A549 (cell line): ENCODE measurements at regions of chr11 and their contacts with region 1.

Region 1: DNA sequence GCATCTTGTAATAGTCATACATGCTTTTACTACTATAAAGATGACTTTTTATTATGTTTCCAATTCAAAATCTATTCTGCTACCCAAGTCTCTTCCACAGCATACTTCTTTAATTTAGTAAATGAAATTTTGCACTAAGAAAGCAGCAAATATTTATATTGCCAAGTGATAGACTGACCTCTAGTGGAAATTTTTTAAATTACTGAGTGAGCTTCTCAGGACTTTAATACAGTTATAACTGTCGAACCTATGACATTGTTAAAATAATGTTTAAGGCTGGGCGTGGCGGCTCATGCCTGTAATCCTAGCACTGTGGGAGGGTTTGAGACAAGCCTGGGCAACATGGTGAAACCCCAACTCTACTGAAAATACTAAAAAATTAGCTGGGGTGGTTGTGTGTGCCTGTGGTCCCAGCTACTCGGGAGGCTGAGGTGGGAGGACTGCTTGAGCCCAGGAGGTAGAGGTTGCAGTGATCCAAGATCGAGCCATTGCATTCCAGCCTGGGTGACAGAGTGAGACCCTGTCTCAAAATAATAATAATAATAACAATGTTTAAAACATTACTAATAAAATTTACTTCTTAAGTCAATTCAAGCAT is 27.3 kb downstream of the STK33 start:
- DNase-seq: peak in 1 of 2 experiments; percentile 44
- ATAC-seq: peak; percentile 85 to 87
- H3K4me3 ChIP-seq: no peak overlapping the region
- H3K27ac ChIP-seq: no peak overlapping the region
- H3K4me1 ChIP-seq: peaks cover 8% of the 10 kb centered on the region; the same call in 2 of the 3 replicates
- CTCF ChIP-seq: peak; percentile 84
- EP300 ChIP-seq: no peak
- POLR2A ChIP-seq: no peak
- RAD21 ChIP-seq: peak; percentile 88 to 93

Region 2: GRCh38 chr11:8192016-8192895 is 374.5 kb before region 1 on chr11:
- CTCF ChIA-PET with region 1: interaction called, 28 read pairs
- POLR2A ChIA-PET with region 1: no interaction called
- DNase-seq: peak; percentile 69 to 78
- ATAC-seq: peak; percentile 90 to 98
- H3K4me3 ChIP-seq: no peak overlapping the region
- H3K27ac ChIP-seq: no peak overlapping the region
- H3K4me1 ChIP-seq: no peaks in the 10 kb centered on the region
- CTCF ChIP-seq: peak; percentile 79
- EP300 ChIP-seq: no peak
- POLR2A ChIP-seq: no peak
- RAD21 ChIP-seq: peak; percentile 74 to 82

Region 3: DNA sequence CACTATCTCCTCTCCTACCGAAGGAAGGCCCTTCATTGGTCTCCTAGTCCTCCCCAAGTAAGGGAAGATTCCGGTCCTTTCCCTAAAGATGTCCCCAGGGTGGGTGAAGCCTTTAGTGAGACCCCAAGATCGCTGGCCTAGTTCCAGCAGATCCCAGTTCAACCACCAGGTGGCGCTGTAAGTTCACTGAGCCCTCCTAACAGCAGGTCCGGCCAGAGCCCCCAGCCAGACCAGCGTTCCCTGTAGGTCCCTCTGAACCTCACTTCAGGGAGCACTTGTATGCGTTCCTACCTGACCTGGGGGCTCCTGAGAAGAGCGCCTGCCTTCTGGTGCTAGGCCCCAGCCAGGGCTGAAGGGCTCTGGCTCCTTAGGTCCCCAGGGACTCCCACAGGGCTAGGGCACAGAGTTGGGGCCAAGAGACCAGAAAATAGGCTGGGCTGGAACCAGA is 341.1 kb before region 1 on chr11:
- CTCF ChIA-PET with region 1: interaction called, 95 read pairs
- POLR2A ChIA-PET with region 1: no interaction called
- DNase-seq: peak; percentile 58 to 88
- ATAC-seq: peak; percentile 32 to 85; a peak in 4 of 6 replicates
- H3K4me3 ChIP-seq: no peak overlapping the region
- H3K27ac ChIP-seq: 0 out of 6 replicates have a peak overlapping the region, but pooled peaks of 1 of the 2 experiments have one; percentile 24
- H3K4me1 ChIP-seq: peaks cover 26% of the 10 kb centered on the region
- CTCF ChIP-seq: peak; percentile 91
- EP300 ChIP-seq: no peak
- POLR2A ChIP-seq: no peak
- RAD21 ChIP-seq: peak; percentile 94 to 95

Region 4: GRCh38 chr11:8459711-8460394 is 106.9 kb before region 1 on chr11:
- CTCF ChIA-PET with region 1: no interaction called
- POLR2A ChIA-PET with region 1: no interaction called
- DNase-seq: no peak
- ATAC-seq: no peak
- H3K4me3 ChIP-seq: no peak overlapping the region
- H3K27ac ChIP-seq: no peak overlapping the region
- H3K4me1 ChIP-seq: no peaks in the 10 kb centered on the region
- CTCF ChIP-seq: no peak
- EP300 ChIP-seq: no peak
- POLR2A ChIP-seq: no peak
- RAD21 ChIP-seq: no peak

Region 5: DNA sequence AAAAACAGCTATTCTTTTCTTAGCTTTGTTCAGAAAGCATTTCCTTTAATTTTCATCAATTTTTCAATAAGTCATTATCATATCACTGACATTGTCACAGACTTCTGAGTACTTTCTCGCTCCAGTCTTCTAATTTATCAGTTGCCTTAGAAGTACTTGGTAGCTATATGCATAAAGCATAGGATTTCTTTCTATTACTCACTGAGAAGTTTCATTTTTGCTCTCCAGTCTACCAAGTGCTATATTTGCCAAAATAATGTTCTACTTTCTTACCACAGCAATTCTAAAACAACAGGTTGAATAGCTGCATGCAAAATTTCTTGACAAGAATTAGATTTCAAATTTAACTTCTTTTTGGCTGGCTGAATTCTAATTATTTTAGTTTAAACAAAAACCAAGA is 89.0 kb before region 1 on chr11:
- CTCF ChIA-PET with region 1: no interaction called
- POLR2A ChIA-PET with region 1: no interaction called
- DNase-seq: no peak
- ATAC-seq: no peak
- H3K4me3 ChIP-seq: no peak overlapping the region
- H3K27ac ChIP-seq: no peak overlapping the region
- H3K4me1 ChIP-seq: no peaks in the 10 kb centered on the region
- CTCF ChIP-seq: no peak
- EP300 ChIP-seq: no peak
- POLR2A ChIP-seq: no peak
- RAD21 ChIP-seq: no peak

Region 6: DNA sequence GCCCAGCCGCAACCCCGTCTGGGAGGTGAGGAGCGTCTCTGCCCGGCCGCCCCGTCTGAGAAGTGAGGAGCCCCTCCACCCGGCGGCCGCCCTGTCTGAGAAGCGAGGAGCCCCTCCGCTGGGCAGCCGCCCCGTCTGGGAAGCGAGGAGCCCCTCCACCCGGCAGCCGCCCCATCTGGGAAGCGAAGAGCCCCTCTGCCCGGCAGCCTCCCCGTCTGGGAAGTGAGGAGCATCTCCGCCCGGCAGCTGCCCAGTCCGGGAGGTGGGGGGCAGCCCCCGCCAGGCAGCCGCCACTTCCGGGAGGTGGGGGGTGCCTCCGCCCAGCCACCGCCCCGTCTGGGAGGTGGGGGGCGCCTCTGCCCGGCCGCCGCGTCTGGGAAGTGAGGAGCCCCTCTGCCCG is 43.3 kb before region 1 on chr11:
- CTCF ChIA-PET with region 1: no interaction called
- POLR2A ChIA-PET with region 1: no interaction called
- DNase-seq: no peak
- ATAC-seq: no peak
- H3K4me3 ChIP-seq: no peak overlapping the region
- H3K27ac ChIP-seq: no peak overlapping the region
- H3K4me1 ChIP-seq: no peaks in the 10 kb centered on the region
- CTCF ChIP-seq: no peak
- EP300 ChIP-seq: no peak
- POLR2A ChIP-seq: no peak
- RAD21 ChIP-seq: no peak

Region 7: DNA sequence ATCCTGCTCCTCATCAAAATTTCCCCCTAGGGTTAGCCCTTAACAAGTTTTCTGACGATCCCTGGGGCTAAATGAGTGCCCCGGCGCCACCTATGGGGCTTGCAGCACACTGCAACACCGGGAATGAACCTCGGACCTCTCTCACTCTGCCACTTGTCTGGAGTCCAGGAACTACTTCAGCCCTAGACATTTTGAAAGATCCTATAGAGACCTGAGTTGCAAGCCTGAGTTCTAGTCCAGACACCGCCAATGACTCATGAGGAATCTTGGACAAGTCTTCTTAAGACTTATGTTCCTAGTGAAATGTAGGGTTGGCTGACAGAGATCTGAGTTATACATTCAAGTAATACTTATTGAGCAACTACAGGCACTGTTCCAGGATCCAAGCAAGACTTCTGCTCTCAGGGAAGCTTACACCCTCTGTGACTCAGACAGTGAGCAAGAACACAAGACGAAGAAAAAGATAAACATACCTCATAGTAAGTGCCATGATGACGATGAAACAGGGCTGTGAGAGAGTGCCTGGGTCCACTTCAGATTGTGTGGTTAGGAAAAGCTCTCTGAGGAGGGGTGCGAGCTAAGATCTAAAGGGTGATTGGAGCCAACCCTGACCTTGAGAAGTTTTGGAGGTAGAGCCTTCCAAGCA is 37.5 kb after region 1 on chr11:
- CTCF ChIA-PET with region 1: interaction called, 10 read pairs
- POLR2A ChIA-PET with region 1: no interaction called
- DNase-seq: peak; percentile 64 to 97
- ATAC-seq: peak; percentile 94
- H3K4me3 ChIP-seq: no peak overlapping the region
- H3K27ac ChIP-seq: peak overlapping the region; percentile 64 to 78
- H3K4me1 ChIP-seq: peaks cover 56% of the 10 kb centered on the region
- CTCF ChIP-seq: peak; percentile 74
- EP300 ChIP-seq: peak; percentile 61 to 74; a peak in 2 of 5 replicates
- POLR2A ChIP-seq: no peak
- RAD21 ChIP-seq: peak; percentile 51 to 54